T-cell (primary cell): ENCODE measurements at regions of chr17 and their contacts with region 1.

Region 1: DNA sequence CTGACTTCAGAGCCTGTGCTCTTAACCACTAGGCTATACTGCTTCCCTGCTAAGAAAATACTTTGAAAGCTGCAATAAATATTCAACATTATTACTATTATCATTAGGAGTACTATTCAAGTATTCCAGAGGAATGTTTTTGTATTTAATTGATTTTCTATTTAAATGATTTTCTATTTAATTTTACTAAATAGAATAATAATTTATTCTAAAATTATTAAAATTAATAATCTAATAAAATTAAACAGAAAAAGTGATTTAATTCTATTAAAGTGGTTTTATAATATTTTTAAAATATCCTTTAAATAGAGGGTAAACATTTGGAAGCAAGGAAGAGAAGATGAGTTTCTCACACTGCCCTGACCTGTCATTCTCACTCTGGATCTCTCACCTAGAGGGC is 173.8 kb downstream of the DNAH9 start:
- DNase-seq: no peak
- ATAC-seq: no peak
- H3K4me3 ChIP-seq: no peak overlapping the region
- H3K4me3 Mint-ChIP-seq: no peak overlapping the region
- H3K27ac ChIP-seq: no peak overlapping the region
- H3K27ac Mint-ChIP-seq: no peak overlapping the region
- H3K4me1 ChIP-seq: no peaks in the 10 kb centered on the region
- H3K4me1 Mint-ChIP-seq: no peaks in the 10 kb centered on the region
- H3K27me3 ChIP-seq: peaks cover 0 to 5% of the 10 kb centered on the region in 2 experiments
- H3K27me3 Mint-ChIP-seq: no peaks in the 10 kb centered on the region

Region 2: DNA sequence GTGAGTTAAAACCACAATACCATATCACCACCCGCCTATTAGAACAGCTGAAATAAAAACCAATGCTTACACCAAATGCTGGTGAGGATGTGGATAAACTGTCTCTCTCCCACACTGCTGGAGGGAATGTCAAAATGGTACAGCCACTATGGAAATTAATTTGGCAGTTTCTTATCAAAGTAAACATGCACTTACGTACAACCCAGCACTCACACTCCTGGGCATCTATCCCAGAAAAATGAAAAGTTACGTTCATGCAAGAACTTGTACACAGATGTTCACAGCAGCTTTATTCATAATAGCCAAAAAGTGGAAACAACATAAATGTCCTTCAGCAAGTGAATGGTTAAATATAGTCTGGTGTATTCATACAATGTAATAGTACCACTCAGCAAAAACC is 720.4 kb after region 1 on chr17:
- CTCF ChIA-PET with region 1: no interaction called
- POLR2A ChIA-PET with region 1: interaction called in 1 of 2 experiments, 12 read pairs
- DNase-seq: no peak
- ATAC-seq: no peak
- H3K4me3 ChIP-seq: no peak overlapping the region
- H3K4me3 Mint-ChIP-seq: no peak overlapping the region
- H3K27ac ChIP-seq: no peak overlapping the region
- H3K27ac Mint-ChIP-seq: no peak overlapping the region
- H3K4me1 ChIP-seq: no peaks in the 10 kb centered on the region
- H3K4me1 Mint-ChIP-seq: no peaks in the 10 kb centered on the region
- H3K27me3 ChIP-seq: no peaks in the 10 kb centered on the region
- H3K27me3 Mint-ChIP-seq: no peaks in the 10 kb centered on the region